ENCODE measurements at regions of chr4 and their contacts with region 1.

Region 1: DNA sequence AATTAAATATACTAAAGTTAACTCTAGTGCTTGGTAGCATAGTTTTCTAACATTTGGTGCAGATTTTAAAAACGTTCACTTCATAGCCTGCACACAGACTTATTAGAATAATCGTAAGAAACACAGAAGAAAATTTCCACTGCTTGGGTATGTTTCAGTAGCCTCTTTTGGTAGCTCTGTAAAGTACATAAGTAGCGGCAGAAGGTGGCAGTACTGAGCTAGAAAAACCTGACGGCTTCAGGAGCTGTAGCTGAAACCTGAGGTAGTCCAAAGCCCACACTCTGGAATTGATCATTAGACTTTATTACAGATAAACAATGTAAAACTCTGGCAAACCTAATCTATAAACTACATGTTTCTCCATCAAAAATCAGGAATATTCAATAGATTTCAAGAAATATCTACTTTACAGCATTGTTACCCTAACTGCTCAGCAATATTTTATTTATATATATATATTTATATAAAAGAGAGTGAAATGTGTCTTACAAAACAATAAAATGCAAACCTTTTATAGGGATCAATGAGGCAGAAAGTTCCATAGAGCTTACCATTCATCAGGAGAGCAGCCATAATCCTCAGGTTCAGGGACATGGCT is 88.2 kb downstream of the ATP8A1 start:
- DNase-seq: peak; percentile 47 to 61 (median 57)
- H3K4me3 ChIP-seq: no peak overlapping the region
- H3K4me3 Mint-ChIP-seq: no peak overlapping the region
- H3K27ac ChIP-seq: no peak overlapping the region
- H3K27ac Mint-ChIP-seq: peak overlapping the region in 1 of 7 donors; percentile 2
- H3K4me1 ChIP-seq: no peaks in the 10 kb centered on the region
- H3K4me1 Mint-ChIP-seq: no peaks in the 10 kb centered on the region
- H3K27me3 ChIP-seq: no peaks in the 10 kb centered on the region
- H3K27me3 Mint-ChIP-seq: no peaks in the 10 kb centered on the region

Region 2: DNA sequence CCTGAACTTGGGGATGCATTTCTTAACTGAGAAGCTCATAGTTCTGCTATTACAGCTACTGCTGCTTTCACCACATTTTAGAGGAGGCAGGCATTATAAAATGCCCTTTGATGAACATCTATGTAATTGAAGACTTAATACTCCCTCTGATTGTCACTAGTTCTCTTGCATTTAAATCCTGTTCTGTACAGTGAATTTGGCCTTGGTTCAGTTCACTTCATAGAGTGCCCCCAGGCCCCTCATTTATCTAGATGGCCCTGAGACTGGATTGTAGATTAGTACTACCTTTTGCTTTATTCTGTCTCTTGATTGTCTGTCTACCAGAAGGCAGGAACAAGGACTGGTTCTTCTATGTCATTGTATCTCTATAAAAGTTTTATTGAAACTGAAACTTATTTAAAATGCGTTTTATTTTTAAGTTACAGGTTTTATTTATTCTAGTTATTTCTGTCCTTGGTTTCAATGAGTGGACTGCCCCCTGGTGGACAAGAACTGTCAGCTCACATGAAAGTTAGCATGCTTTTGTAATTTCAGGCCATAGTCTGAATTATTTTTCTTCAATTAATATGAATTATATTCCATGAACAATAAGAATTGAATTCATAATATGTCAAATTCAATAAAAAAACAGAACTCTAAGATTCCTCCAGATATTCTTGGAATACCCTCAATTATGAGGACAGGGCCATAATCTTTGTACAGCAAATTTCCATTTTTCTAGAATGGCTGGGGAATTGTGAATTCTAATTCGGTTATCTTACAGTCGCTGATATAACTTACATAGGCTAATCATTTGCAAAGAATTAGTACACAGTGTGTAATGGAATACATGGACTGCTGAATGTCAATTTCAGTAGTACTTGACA is 680.7 kb before region 1 on chr4:
- CTCF ChIA-PET with region 1: no interaction called
- POLR2A ChIA-PET with region 1: no interaction called
- intact Hi-C with region 1: no loop called
- DNase-seq: peak in 3 of 5 donors; percentile 29 to 34 (median 32)
- H3K4me3 ChIP-seq: no peak overlapping the region
- H3K4me3 Mint-ChIP-seq: no peak overlapping the region
- H3K27ac ChIP-seq: no peak overlapping the region
- H3K27ac Mint-ChIP-seq: no peak overlapping the region
- H3K4me1 ChIP-seq: no peaks in the 10 kb centered on the region
- H3K4me1 Mint-ChIP-seq: peaks cover 0 to 4% (median 1%) of the 10 kb centered on the region in 4 donors
- H3K27me3 ChIP-seq: no peaks in the 10 kb centered on the region
- H3K27me3 Mint-ChIP-seq: peaks cover 31 to 36% of the 10 kb centered on the region in 2 donors

Region 3: GRCh38 chr4:42048407-42048806 is 520.3 kb before region 1 on chr4:
- CTCF ChIA-PET with region 1: no interaction called
- POLR2A ChIA-PET with region 1: no interaction called
- intact Hi-C with region 1: no loop called
- DNase-seq: no peak
- H3K4me3 ChIP-seq: no peak overlapping the region
- H3K4me3 Mint-ChIP-seq: no peak overlapping the region
- H3K27ac ChIP-seq: no peak overlapping the region
- H3K27ac Mint-ChIP-seq: peak overlapping the region in 1 of 7 donors; percentile 49
- H3K4me1 ChIP-seq: no peaks in the 10 kb centered on the region
- H3K4me1 Mint-ChIP-seq: peaks cover 0 to 2% (median under 1%) of the 10 kb centered on the region in 4 donors
- H3K27me3 ChIP-seq: no peaks in the 10 kb centered on the region
- H3K27me3 Mint-ChIP-seq: no peaks in the 10 kb centered on the region

Region 4: DNA sequence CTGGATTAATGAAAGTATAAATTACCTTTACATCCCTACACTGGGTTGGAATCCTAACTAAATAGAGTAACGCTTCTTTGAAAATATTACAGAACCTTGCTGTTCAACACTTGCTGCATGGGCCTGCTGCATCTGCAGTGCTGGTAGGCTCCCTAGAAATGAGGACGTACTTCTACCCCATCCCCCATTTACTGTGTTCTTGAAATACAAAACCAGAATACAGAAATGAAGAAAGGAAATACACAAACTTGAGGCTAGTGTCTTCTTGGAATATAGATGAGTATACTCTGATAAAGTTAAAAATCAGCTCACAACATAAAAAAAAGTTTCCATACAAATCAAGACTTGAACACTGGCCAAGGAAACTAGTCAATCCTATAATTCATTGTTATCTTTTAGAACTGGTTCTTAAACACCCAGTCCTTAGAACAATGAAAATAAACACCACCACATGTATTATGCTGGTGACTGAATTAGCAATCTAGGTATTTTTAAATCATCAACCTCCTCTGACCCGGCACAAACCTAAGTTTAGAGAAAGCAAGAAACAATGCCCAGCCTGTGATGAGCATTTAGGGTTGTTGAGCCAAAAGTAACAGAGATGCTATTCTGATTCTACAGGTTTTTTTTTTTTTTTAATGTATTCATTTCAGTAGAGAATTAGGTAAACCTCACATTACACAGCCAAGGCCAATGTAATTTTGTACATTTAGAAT is 38.5 kb after region 1 on chr4:
- CTCF ChIA-PET with region 1: no interaction called
- POLR2A ChIA-PET with region 1: no interaction called
- intact Hi-C with region 1: no loop called
- DNase-seq: no peak
- H3K4me3 ChIP-seq: no peak overlapping the region
- H3K4me3 Mint-ChIP-seq: no peak overlapping the region
- H3K27ac ChIP-seq: no peak overlapping the region
- H3K27ac Mint-ChIP-seq: no peak overlapping the region
- H3K4me1 ChIP-seq: no peaks in the 10 kb centered on the region
- H3K4me1 Mint-ChIP-seq: peaks cover 0 to 21% (median 9%) of the 10 kb centered on the region in 4 donors
- H3K27me3 ChIP-seq: no peaks in the 10 kb centered on the region
- H3K27me3 Mint-ChIP-seq: no peaks in the 10 kb centered on the region

Region 5: DNA sequence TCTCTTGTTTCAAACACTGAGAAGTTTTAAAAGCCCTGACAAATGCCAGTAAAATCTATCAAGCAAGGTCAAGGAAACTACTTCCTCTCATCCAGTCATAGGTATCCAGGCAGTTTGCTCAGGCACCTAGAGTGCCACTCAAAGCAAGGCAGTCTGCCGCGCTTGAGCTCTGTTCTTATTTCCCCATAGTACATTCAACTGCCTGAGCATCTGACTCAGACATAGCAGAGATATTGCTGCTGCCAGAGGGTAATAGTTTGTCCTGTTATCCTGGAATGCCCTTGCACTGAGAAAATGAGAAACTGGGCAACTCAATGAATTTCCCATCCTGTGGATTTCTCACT is 104.3 kb after region 1 on chr4:
- CTCF ChIA-PET with region 1: interaction called, 14 read pairs
- POLR2A ChIA-PET with region 1: no interaction called
- intact Hi-C with region 1: no loop called
- DNase-seq: no peak
- H3K4me3 ChIP-seq: no peak overlapping the region
- H3K4me3 Mint-ChIP-seq: peak overlapping the region in 4 of 8 donors; percentile 31 to 71 (median 61)
- H3K27ac ChIP-seq: no peak overlapping the region
- H3K27ac Mint-ChIP-seq: peak overlapping the region in 3 of 7 donors; percentile 78 to 96 (median 91)
- H3K4me1 ChIP-seq: peaks cover 24% of the 10 kb centered on the region
- H3K4me1 Mint-ChIP-seq: peaks cover 19 to 48% (median 31%) of the 10 kb centered on the region in 4 donors
- H3K27me3 ChIP-seq: no peaks in the 10 kb centered on the region
- H3K27me3 Mint-ChIP-seq: peaks cover 2 to 4% of the 10 kb centered on the region in 2 donors

Region 6: DNA sequence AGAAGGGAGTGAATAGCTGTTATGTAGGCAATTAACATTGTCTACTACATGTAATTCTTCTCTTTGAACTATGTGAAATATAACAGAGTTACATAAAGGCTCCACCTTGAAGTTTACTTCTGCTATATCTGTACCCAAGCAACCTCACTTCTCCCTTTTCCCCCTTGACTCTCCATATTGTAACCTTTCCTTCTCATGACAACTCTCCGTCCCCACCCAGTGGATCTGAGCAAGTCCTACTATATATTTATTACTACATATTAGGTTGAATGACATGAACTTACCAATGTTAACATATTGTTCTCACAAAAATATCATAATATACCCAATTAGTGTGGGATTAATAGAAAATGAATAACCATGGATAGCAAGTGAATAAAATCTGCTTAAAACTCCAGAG is 181.4 kb after region 1 on chr4:
- CTCF ChIA-PET with region 1: interaction called, 103 read pairs
- POLR2A ChIA-PET with region 1: no interaction called
- intact Hi-C with region 1: loop called (anchors 1 kb)
- DNase-seq: peak in 4 of 5 donors; percentile 10 to 41 (median 25)
- H3K4me3 ChIP-seq: no peak overlapping the region
- H3K4me3 Mint-ChIP-seq: no peak overlapping the region
- H3K27ac ChIP-seq: no peak overlapping the region
- H3K27ac Mint-ChIP-seq: no peak overlapping the region
- H3K4me1 ChIP-seq: no peaks in the 10 kb centered on the region
- H3K4me1 Mint-ChIP-seq: peaks cover 0 to 1% (median 0%) of the 10 kb centered on the region in 4 donors
- H3K27me3 ChIP-seq: no peaks in the 10 kb centered on the region
- H3K27me3 Mint-ChIP-seq: peaks cover 1 to 2% of the 10 kb centered on the region in 2 donors

Region 7: DNA sequence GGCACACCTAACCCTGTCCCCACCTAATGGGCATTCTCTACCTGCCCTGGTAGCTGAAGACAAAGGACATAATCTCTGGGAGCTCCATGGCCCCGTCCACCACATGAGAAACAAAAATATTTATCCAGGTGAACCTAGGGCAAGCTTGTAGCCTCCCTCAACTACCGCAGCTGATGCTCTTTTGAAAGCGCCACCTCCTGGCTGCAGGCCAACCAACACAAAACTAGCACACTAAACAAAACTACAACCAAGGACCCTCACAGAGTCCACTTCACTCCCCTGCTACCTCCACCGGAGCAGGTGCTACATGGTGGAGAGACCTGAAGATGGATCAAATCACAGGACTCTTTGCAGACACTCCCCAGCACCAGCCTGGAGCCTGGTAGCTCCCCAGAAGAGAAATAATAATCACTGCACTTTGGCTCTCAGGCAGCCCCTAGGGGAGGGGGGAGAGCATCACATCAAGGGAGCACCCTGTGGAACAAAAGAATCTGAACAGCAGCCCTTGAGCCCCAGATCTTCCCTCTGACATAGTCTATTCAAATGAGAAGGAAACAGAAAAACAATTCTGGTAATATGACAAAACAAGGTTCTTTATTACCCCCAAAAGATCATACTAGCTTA is 199.5 kb after region 1 on chr4:
- CTCF ChIA-PET with region 1: interaction called, 24 read pairs
- POLR2A ChIA-PET with region 1: no interaction called
- intact Hi-C with region 1: loop called (anchors 1 kb)
- DNase-seq: no peak
- H3K4me3 ChIP-seq: no peak overlapping the region
- H3K4me3 Mint-ChIP-seq: no peak overlapping the region
- H3K27ac ChIP-seq: no peak overlapping the region
- H3K27ac Mint-ChIP-seq: no peak overlapping the region
- H3K4me1 ChIP-seq: no peaks in the 10 kb centered on the region
- H3K4me1 Mint-ChIP-seq: no peaks in the 10 kb centered on the region
- H3K27me3 ChIP-seq: no peaks in the 10 kb centered on the region
- H3K27me3 Mint-ChIP-seq: no peaks in the 10 kb centered on the region

Region 8: GRCh38 chr4:42816880-42817400 is 248.2 kb after region 1 on chr4:
- CTCF ChIA-PET with region 1: interaction called, 11 read pairs
- POLR2A ChIA-PET with region 1: no interaction called
- intact Hi-C with region 1: loop called (anchors 1 kb)
- DNase-seq: no peak
- H3K4me3 ChIP-seq: no peak overlapping the region
- H3K4me3 Mint-ChIP-seq: no peak overlapping the region
- H3K27ac ChIP-seq: no peak overlapping the region
- H3K27ac Mint-ChIP-seq: no peak overlapping the region
- H3K4me1 ChIP-seq: no peaks in the 10 kb centered on the region
- H3K4me1 Mint-ChIP-seq: no peaks in the 10 kb centered on the region
- H3K27me3 ChIP-seq: no peaks in the 10 kb centered on the region
- H3K27me3 Mint-ChIP-seq: peaks cover under 1 to 5% of the 10 kb centered on the region in 2 donors

Region 9: DNA sequence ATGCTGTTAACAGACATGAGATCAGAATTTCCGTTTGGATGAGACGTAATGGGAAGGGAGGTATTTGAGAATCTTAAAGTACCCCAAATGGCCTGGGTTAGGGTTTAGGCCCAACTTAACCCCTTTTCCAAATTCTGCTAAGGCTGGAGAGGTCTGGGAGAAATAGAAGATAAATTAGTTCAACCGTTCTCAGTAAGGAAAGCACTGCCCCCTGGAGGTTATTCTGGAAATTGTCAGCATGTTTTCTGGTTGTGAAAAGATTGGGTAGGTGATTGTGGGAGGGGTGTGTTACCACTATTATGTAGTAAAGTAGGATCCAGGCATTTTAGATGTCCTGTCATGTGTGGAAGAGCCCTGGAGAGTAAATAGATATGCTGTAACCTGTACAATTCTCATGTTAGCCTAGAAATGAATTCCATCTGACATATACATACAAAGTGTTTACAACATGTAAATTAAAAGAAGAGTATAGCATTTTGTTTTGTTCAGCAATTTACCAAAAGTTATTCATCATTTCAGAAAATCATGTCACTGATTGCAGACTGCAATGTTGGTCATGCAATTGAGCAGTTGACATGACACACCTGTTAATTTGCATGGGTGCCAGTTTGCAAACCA is 297.0 kb after region 1 on chr4:
- CTCF ChIA-PET with region 1: interaction called, 34 read pairs
- POLR2A ChIA-PET with region 1: interaction called, 3 read pairs
- intact Hi-C with region 1: loop called (anchors 1 kb)
- DNase-seq: peak; percentile 41 to 55 (median 52)
- H3K4me3 ChIP-seq: no peak overlapping the region
- H3K4me3 Mint-ChIP-seq: no peak overlapping the region
- H3K27ac ChIP-seq: no peak overlapping the region
- H3K27ac Mint-ChIP-seq: no peak overlapping the region
- H3K4me1 ChIP-seq: no peaks in the 10 kb centered on the region
- H3K4me1 Mint-ChIP-seq: no peaks in the 10 kb centered on the region
- H3K27me3 ChIP-seq: peaks cover 2% of the 10 kb centered on the region
- H3K27me3 Mint-ChIP-seq: peaks cover 5 to 15% of the 10 kb centered on the region in 2 donors